A549 (cell line): ENCODE measurements at regions of chr1 and their contacts with region 1.

Region 1: GRCh38 chr1:66996018-66996682 is 57.8 kb downstream of the SLC35D1 start:
- DNase-seq: peak; percentile 16 to 69
- ATAC-seq: peak; percentile 71 to 89
- H3K4me3 ChIP-seq: no peak overlapping the region
- H3K27ac ChIP-seq: no peak overlapping the region
- H3K4me1 ChIP-seq: no peaks in the 10 kb centered on the region
- CTCF ChIP-seq: peak; percentile 78
- EP300 ChIP-seq: no peak
- POLR2A ChIP-seq: no peak
- RAD21 ChIP-seq: peak; percentile 76 to 83

Region 2: GRCh38 chr1:66984491-66984890 is 11.7 kb before region 1 on chr1:
- CTCF ChIA-PET with region 1: interaction called, 12 read pairs
- POLR2A ChIA-PET with region 1: no interaction called
- DNase-seq: no peak
- ATAC-seq: no peak
- H3K4me3 ChIP-seq: no peak overlapping the region
- H3K27ac ChIP-seq: no peak overlapping the region
- H3K4me1 ChIP-seq: peaks cover 37% of the 10 kb centered on the region
- CTCF ChIP-seq: no peak
- EP300 ChIP-seq: no peak
- POLR2A ChIP-seq: no peak
- RAD21 ChIP-seq: no peak